ENCODE measurements at regions of chr9 and their contacts with region 1.

Region 1: DNA sequence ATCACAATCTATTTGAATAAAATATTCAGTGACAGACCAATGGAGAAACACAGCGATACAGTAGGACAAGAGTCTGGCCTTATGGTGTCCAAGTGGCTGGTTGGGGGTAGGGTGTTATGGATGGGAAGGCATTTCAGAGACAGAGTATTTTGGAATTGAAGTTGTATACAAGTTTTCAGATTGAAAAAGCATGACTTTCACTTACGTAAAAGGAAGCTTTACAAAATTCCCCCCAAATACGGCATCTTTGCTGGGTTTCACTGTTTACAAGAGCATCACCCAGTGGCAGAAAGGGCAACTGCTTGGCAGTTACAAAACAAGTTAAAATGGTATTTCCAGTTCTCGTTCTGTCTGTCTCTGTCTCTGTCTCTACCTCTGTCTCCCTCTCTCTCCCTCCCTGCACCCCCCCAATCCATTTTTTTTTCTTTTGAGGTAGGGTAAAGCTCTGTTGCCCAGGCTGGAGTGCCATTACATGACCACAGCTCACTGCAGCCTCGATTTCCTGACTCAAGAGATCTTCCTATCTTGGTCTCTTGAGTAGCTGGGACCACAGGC is 86.2 kb downstream of the PTPN3 start:
- DNase-seq: peak; percentile 70
- ATAC-seq: peak; percentile 46
- H3K4me3 ChIP-seq: no peak overlapping the region
- H3K4me3 Mint-ChIP-seq: peak overlapping the region; percentile 68
- H3K27ac ChIP-seq: no peak overlapping the region
- H3K27ac Mint-ChIP-seq: peak overlapping the region; percentile 70
- H3K4me1 ChIP-seq: peaks cover 9 to 30% of the 10 kb centered on the region in 2 donors
- H3K4me1 Mint-ChIP-seq: peaks cover 45% of the 10 kb centered on the region
- H3K27me3 ChIP-seq: no peaks in the 10 kb centered on the region
- H3K27me3 Mint-ChIP-seq: peaks cover 15% of the 10 kb centered on the region
- CTCF ChIP-seq: peak; percentile 69

Region 2: DNA sequence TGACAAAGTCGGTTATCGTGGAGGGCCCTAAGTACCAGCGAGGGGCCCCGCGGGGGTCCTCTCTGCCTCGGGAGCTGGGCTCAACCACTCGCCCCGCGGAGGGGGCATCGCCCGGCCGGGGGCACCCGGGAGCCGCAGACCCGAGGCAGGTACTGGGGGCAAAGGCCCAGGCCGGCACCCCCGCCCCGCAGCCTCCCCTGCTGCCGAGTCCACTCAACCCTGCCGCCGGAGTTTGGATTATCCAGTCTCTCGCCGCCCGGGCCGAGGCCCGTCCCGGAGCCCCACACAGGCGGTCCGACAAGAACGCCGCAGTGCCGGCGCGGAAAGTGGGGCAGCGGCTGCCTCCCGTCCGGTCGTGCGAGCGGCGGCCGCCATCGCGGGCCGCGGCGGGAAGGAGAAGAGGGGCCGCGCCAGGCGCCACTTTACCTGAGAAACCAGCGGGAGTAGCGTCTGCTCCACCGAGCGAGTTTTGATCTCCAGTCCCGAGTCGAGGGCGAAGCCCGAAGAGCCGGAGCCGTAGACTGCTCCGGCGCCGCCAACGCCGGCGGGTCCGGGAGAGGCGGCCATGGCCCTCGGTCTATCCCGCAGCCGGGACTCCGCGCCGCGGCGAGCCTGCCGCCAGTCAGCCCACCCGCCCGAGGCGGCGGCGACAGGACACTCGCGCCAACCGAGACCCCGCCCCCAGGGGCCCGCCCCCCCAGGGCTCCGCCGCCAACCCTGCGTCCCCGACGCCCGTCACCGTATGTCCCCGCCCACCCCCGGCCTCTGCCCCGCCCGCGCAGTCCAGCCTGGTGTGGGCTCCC is 398.8 kb before region 1 on chr9 and contains the start of gene CTNNAL1:
- CTCF ChIA-PET with region 1: no interaction called
- POLR2A ChIA-PET with region 1: no interaction called
- intact Hi-C with region 1: loop called (anchors 10 kb)
- DNase-seq: peak; percentile 87
- ATAC-seq: peak; percentile 97
- H3K4me3 ChIP-seq: peak within 1 kb of the TSS; percentile 43 to 80 (median 71)
- H3K4me3 Mint-ChIP-seq: peak within 1 kb of the TSS; percentile 94
- H3K27ac ChIP-seq: peak within 1 kb of the TSS; percentile 9 to 50
- H3K27ac Mint-ChIP-seq: peak within 1 kb of the TSS; percentile 90
- H3K4me1 ChIP-seq: peaks cover 16 to 19% of the 10 kb centered on the region in 2 donors
- H3K4me1 Mint-ChIP-seq: peaks cover 42% of the 10 kb centered on the region
- H3K27me3 ChIP-seq: peaks cover 0 to 16% (median 10%) of the 10 kb centered on the region in 4 experiments
- H3K27me3 Mint-ChIP-seq: peaks cover 6% of the 10 kb centered on the region
- CTCF ChIP-seq: no peak
- total RNA-seq, gene CTNNAL1: 1.5 and 2.3 TPM in 2 replicates

Region 3: DNA sequence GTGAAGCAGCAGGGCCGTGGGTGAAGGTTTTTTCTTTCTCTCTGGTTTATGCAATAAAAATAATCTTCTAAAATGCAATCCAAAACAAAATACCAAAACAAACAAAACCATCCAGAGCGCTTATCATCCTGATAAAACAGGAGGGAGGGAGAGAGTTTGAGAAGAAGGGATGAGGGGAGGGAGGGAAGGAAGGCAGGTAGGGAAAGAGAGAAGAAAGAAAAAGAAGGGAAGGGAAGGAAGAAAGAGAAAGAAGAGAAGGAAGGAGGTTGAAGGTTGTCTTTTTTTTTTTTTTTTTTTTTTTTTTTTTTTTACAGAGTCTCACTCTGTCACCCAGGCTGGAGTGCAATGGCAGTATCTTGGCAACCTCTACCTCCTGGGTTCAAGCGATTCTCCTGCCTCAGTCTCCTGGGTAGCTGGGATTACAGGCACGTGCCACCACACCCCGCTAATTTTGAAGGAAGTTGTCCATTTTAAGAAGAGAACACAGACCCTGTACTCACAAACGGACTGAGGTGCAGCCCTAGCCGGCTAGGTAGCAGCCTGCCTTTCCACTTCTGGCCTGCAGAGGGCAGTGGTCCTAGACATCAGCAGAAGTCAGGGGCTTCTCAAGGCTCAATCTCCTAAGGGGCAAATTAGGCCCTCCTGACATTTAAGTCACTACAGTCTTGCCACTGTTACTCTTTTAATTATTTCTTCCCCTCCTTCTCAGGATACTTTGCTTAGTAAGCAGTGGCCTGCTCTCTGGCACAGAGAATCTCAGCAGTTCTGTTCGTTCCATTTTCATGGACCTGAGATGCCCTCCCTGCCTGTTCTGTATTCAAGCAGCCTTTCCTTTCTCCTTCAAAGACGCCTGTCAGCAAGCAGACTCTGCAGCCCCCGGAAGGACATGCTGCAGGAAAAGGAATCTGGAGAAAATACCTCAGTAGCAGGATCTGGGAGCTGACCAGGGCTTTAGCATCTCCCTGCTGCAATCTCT is 167.4 kb before region 1 on chr9:
- CTCF ChIA-PET with region 1: interaction called, 3 read pairs
- POLR2A ChIA-PET with region 1: no interaction called
- intact Hi-C with region 1: loop called (anchors 1 kb)
- DNase-seq: peak; percentile 72
- ATAC-seq: peak; percentile 81
- H3K4me3 ChIP-seq: no peak overlapping the region
- H3K4me3 Mint-ChIP-seq: no peak overlapping the region
- H3K27ac ChIP-seq: no peak overlapping the region
- H3K27ac Mint-ChIP-seq: no peak overlapping the region
- H3K4me1 ChIP-seq: no peaks in the 10 kb centered on the region
- H3K4me1 Mint-ChIP-seq: no peaks in the 10 kb centered on the region
- H3K27me3 ChIP-seq: peaks cover 0 to 19% (median 4%) of the 10 kb centered on the region in 4 experiments
- H3K27me3 Mint-ChIP-seq: peaks cover 22% of the 10 kb centered on the region
- CTCF ChIP-seq: peak; percentile 92

Region 4: DNA sequence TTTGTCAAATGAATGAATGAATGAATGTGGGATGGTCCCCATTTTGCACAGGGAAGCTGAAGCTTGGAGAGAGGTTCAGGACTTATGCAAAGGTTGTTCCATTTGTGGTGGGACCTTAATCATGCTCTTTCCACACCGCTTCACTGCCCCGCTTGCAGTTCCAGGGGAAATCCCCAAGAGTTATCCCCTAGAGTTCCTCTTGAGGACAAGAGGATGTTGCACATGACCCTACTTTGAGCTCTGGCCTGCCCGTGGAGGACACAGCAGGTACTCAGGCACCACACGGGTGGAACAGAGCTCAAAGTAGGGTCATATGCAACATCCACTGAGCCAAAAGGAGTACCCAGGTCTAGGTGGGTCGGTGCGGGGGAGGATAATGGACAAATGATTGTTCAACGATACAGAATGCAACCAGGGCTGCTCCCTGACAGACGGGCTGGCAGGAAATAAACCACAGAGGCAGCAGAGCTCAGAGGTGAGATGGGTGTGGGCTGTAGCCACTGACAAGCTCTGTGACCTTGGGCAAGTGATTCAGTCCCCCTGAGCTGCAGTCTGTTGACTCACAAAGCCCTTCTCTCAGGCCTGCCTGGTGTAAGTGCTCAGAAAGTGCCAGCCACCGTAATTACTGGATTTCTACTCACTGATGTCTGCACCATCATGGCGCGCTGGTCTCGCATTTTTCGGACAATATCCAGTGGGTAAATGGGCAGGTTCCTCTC is 30.7 kb before region 1 on chr9:
- CTCF ChIA-PET with region 1: interaction called, 7 read pairs
- POLR2A ChIA-PET with region 1: no interaction called
- intact Hi-C with region 1: loop called (anchors 2 kb)
- DNase-seq: no peak
- ATAC-seq: peak; percentile 47
- H3K4me3 ChIP-seq: no peak overlapping the region
- H3K4me3 Mint-ChIP-seq: peak overlapping the region; percentile 27
- H3K27ac ChIP-seq: no peak overlapping the region
- H3K27ac Mint-ChIP-seq: peak overlapping the region; percentile 48
- H3K4me1 ChIP-seq: peaks cover 0 to 11% of the 10 kb centered on the region in 2 donors
- H3K4me1 Mint-ChIP-seq: peaks cover 10% of the 10 kb centered on the region
- H3K27me3 ChIP-seq: peaks cover 0 to 8% (median under 1%) of the 10 kb centered on the region in 4 experiments
- H3K27me3 Mint-ChIP-seq: peaks cover 34% of the 10 kb centered on the region
- CTCF ChIP-seq: no peak

Region 5: GRCh38 chr9:109440797-109441287 is 29.0 kb after region 1 on chr9:
- CTCF ChIA-PET with region 1: interaction called, 6 read pairs
- POLR2A ChIA-PET with region 1: interaction called, 4 read pairs
- intact Hi-C with region 1: loop called (anchors 1 kb)
- DNase-seq: peak; percentile 60
- ATAC-seq: peak; percentile 79
- H3K4me3 ChIP-seq: no peak overlapping the region
- H3K4me3 Mint-ChIP-seq: peak overlapping the region; percentile 32
- H3K27ac ChIP-seq: no peak overlapping the region
- H3K27ac Mint-ChIP-seq: peak overlapping the region; percentile 38
- H3K4me1 ChIP-seq: peaks cover 14 to 18% of the 10 kb centered on the region in 2 donors
- H3K4me1 Mint-ChIP-seq: peaks cover 18% of the 10 kb centered on the region
- H3K27me3 ChIP-seq: peaks cover 0 to 25% (median 6%) of the 10 kb centered on the region in 4 experiments
- H3K27me3 Mint-ChIP-seq: peaks cover 43% of the 10 kb centered on the region
- CTCF ChIP-seq: peak; percentile 60

Measured in B cell (primary cell).